ENCODE measurements at regions of chr9 and their contacts with region 1.

Region 1: GRCh38 chr9:93467062-93467416 is 13.7 kb upstream of the FAM120AOS start:
- DNase-seq: no peak
- H3K4me3 Mint-ChIP-seq: peak overlapping the region; percentile 50
- H3K27ac Mint-ChIP-seq: peak overlapping the region; percentile 85
- H3K4me1 Mint-ChIP-seq: peaks cover 58% of the 10 kb centered on the region
- H3K27me3 Mint-ChIP-seq: no peaks in the 10 kb centered on the region
- CTCF ChIP-seq: no peak

Region 2: DNA sequence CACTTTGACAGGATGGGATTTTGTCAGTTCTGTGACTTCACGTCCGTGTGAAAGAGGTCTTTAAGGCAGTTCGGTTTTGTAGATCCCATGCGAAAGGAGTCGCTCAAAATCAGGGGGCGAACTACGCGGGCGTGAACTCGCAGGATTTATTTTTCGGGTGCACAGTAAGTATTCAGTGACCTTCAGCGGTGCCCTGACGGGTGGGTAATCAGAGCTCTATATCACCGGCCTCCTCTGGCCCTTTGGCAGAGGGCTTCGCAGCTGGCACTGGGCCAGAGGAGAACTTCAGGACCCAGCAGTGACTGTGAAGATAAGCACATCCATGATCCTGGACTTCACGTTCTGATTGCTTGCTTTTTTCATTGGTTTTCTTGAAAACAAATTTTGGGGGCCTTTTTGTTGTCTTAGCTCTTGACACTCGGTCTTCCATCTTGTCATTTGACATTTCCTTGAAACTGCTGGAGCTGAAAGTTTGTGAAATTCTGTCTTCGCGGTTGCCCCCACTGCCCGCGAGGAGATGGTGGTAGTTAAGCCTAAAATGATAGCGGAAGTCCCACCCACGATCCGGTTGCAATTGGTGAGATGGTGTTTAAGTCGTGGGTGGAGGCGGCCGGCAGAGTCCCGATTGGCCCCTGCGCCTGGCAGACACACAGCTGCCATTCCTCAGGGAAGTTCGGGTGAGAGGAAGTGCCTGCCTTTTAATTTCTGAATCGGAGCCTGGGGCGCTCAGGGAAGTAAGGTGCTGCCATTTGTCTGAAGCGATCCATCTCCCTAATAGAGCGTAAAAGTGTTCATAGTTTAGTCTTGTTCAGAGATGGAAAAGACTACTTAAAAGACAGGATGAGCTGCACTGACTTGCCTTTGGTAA is 13.8 kb before region 1 on chr9 and contains the start of gene FAM120AOS:
- CTCF ChIA-PET with region 1: interaction called, 7 read pairs
- intact Hi-C with region 1: loop called (anchors 2 kb)
- DNase-seq: peak; percentile 85
- H3K4me3 Mint-ChIP-seq: peak within 1 kb of the TSS; percentile 79
- H3K27ac Mint-ChIP-seq: peak within 1 kb of the TSS; percentile 85
- H3K4me1 Mint-ChIP-seq: peaks cover 24% of the 10 kb centered on the region
- H3K27me3 Mint-ChIP-seq: no peaks in the 10 kb centered on the region
- CTCF ChIP-seq: no peak
- total RNA-seq, gene FAM120AOS: 50.5 and 53.4 TPM in 2 replicates